Activated B cell treated with CpG ODN at 0.5 μM for 24 hours (primary cell): ENCODE measurements at regions of chr3 and their contacts with region 1.

Region 1: DNA sequence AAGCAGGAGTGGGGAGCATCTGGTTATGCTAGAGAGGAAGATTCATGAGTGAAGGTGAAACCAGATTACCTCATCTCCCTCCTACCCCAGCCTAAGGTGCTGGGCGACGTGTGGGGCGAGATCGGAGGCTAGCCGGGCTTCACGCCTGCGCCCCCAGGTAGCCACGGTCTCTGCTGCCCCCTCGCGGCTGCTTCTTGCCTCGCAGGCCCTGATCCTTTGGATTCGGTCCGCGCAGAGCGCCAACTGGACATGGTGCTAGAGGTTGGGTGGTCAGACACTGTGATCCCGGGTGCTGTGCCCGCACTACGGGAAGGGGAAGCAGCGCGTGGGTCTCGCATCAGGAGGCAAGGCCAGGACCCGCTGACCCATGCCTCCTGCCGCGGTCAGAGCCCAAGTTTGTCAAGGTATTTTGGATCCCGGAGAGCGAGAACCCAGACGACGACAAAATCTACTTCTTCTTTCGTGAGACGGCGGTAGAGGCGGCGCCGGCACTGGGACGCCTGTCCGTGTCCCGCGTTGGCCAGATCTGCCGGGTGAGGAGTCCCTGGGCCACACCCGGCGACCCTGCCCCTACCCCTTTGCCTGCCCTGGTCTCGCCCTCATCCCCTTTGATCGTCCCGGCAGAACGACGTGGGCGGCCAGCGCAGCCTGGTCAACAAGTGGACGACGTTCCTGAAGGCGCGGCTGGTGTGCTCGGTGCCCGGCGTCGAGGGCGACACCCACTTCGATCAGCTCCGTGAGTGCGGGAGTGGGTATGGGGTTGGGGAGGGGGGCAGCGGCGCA is 4.2 kb downstream of the SEMA3B start:
- DNase-seq: peak; percentile 91
- ATAC-seq: peak; percentile 98
- H3K4me3 Mint-ChIP-seq: peak overlapping the region; percentile 69
- H3K27ac Mint-ChIP-seq: no peak overlapping the region
- H3K4me1 Mint-ChIP-seq: peaks cover 25% of the 10 kb centered on the region
- H3K27me3 Mint-ChIP-seq: peaks cover 35% of the 10 kb centered on the region
- CTCF ChIP-seq: no peak

Region 2: GRCh38 chr3:50121416-50122032 is 151.6 kb before region 1 on chr3:
- CTCF ChIA-PET with region 1: no interaction called
- POLR2A ChIA-PET with region 1: interaction called, 3 read pairs
- intact Hi-C with region 1: loop called (anchors 1 kb)
- DNase-seq: peak; percentile 61
- ATAC-seq: peak; percentile 88
- H3K4me3 Mint-ChIP-seq: no peak overlapping the region
- H3K27ac Mint-ChIP-seq: no peak overlapping the region
- H3K4me1 Mint-ChIP-seq: no peaks in the 10 kb centered on the region
- H3K27me3 Mint-ChIP-seq: no peaks in the 10 kb centered on the region
- CTCF ChIP-seq: peak; percentile 21

Region 3: DNA sequence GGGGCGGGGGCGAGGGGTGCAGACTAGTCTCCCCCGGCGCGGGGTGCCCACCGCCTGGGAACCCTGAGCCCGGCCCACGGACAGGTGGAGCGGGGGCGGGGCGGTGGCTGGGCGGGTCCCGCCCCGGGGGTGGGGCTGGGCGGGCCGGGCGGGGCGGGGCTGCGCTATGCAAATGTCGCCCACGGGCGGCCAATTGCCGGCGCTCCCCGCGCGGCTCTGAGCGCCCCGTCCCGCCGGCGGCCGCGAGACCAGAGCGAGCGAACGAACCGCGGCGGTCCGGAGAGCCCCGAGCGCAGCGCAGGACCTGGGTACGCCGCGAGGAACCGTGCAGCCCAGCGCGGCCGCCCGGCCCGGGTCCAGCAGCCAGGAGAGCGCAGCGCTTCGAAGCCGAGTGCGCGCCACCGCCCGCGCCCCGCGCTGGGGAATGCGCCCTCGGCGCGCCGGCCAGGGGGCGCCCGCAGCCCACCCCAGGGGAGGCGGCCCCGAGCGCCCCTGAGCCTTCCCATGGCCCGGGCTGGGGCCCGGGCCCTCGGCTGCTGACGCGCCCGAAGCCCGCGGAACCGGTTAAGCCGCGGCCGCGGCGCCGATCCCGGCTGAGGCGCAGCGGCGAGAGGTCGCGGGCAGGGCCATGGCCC is 118.1 kb before region 1 on chr3 and contains the start of gene SEMA3F:
- CTCF ChIA-PET with region 1: no interaction called
- POLR2A ChIA-PET with region 1: no interaction called
- intact Hi-C with region 1: loop called (anchors 1 kb)
- DNase-seq: peak; percentile 63
- ATAC-seq: peak; percentile 92
- H3K4me3 Mint-ChIP-seq: peak within 1 kb of the TSS; percentile 79
- H3K27ac Mint-ChIP-seq: no peak within 1 kb of the TSS
- H3K4me1 Mint-ChIP-seq: peaks cover 13% of the 10 kb centered on the region
- H3K27me3 Mint-ChIP-seq: peaks cover 34% of the 10 kb centered on the region
- CTCF ChIP-seq: no peak
- total RNA-seq, gene SEMA3F: 0.34 TPM in 1 of 2 replicates, not detected in the other

Region 4: DNA sequence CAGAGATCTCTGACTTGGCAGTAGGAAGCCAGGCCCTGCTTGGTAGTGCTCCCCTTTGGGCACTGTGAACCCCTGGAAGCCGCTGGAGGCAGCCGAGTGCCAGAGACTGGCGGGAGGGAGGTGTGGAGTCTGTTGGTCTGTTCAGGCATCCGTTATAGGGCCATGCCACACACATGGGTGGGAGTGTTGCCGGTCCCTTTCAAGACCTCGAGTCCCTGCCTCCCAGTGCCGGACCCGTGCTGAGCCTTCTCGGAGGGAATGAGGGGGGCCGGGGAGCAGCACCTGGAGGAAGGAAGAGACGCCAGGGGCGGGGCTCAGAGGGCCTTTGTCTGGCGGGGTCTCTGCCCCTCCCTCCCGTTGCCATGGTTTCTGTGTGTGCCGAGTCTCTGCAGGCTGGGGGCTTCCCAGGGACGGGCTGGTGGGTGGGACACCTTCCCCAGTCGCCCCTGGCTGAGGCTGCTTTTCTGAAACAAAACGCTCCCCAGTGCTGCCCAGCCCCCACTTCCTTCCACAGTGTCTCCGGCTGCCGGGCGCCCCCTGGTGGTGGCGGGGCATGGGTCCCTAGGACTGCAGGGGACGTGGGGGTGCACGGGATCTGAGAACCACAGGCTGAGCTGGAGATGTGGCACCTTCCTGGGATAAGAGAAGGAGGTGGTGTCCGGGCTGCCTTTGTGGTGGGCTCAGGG is 27.1 kb before region 1 on chr3:
- CTCF ChIA-PET with region 1: no interaction called
- POLR2A ChIA-PET with region 1: interaction called, 6 read pairs
- intact Hi-C with region 1: loop called (anchors 1 kb)
- DNase-seq: peak; percentile 95
- ATAC-seq: peak; percentile 72
- H3K4me3 Mint-ChIP-seq: peak overlapping the region; percentile 75
- H3K27ac Mint-ChIP-seq: peak overlapping the region; percentile 94
- H3K4me1 Mint-ChIP-seq: peaks cover 88% of the 10 kb centered on the region
- H3K27me3 Mint-ChIP-seq: no peaks in the 10 kb centered on the region
- CTCF ChIP-seq: peak; percentile 79

Region 5: GRCh38 chr3:50912746-50913145 is 639.6 kb after region 1 on chr3:
- CTCF ChIA-PET with region 1: no interaction called
- POLR2A ChIA-PET with region 1: no interaction called
- intact Hi-C with region 1: no loop called
- DNase-seq: no peak
- ATAC-seq: no peak
- H3K4me3 Mint-ChIP-seq: no peak overlapping the region
- H3K27ac Mint-ChIP-seq: no peak overlapping the region
- H3K4me1 Mint-ChIP-seq: no peaks in the 10 kb centered on the region
- H3K27me3 Mint-ChIP-seq: peaks cover 27% of the 10 kb centered on the region
- CTCF ChIP-seq: no peak